Naive thymus-derived CD8-positive, alpha-beta T cell (primary cell): ENCODE measurements at regions of chr12 and their contacts with region 1.

Region 1: GRCh38 chr12:71754461-71755145 is at the start of gene RAB21:
- DNase-seq: peak; percentile 97 to 99 (median 98)
- ATAC-seq: peak; percentile 91
- H3K4me3 Mint-ChIP-seq: peak within 1 kb of the TSS; percentile 88 to 96 (median 94)
- H3K27ac Mint-ChIP-seq: peak within 1 kb of the TSS; percentile 94 to 98 (median 98)
- H3K4me1 Mint-ChIP-seq: peaks cover 16 to 51% (median 45%) of the 10 kb centered on the region in 4 donors
- H3K27me3 Mint-ChIP-seq: peaks cover 0 to 8% (median 2%) of the 10 kb centered on the region in 5 donors
- polyA plus RNA-seq, gene RAB21: 22.3 to 41.0 (median 34.7) TPM

Region 2: GRCh38 chr12:71685914-71686665 is 68.5 kb before region 1 on chr12 and contains the start of gene TMEM19:
- POLR2A ChIA-PET with region 1: interaction called, 14 read pairs
- DNase-seq: peak; percentile 76 to 92 (median 83)
- ATAC-seq: peak; percentile 91
- H3K4me3 Mint-ChIP-seq: peak within 1 kb of the TSS; percentile 89 to 100 (median 94)
- H3K27ac Mint-ChIP-seq: peak within 1 kb of the TSS; percentile 87 to 98 (median 94)
- H3K4me1 Mint-ChIP-seq: peaks cover 10 to 45% (median 28%) of the 10 kb centered on the region in 4 donors
- H3K27me3 Mint-ChIP-seq: no peaks in the 10 kb centered on the region
- polyA plus RNA-seq, gene TMEM19: 40.1 to 53.8 (median 43.5) TPM

Region 3: DNA sequence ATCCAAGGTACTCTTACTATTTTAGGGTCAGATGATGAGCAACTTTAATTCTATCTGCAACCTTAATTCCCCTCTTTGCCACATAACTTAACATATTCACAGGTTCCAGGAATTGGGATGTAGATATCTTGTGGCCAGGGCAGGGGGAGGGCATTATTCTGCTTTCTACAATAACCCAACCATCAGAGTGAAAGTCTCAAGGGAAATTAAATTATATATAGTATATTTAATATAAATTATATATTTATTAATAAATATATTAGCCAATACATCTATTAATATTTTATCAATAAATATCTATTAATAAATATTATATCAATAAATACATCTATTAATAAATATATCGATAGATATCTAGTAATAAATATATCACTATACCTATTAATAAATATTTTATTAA is 11.6 kb before region 1 on chr12:
- POLR2A ChIA-PET with region 1: no interaction called
- DNase-seq: no peak
- ATAC-seq: no peak
- H3K4me3 Mint-ChIP-seq: no peak overlapping the region
- H3K27ac Mint-ChIP-seq: no peak overlapping the region
- H3K4me1 Mint-ChIP-seq: no peaks in the 10 kb centered on the region
- H3K27me3 Mint-ChIP-seq: peaks cover 0 to 8% (median 0%) of the 10 kb centered on the region in 5 donors

Region 4: GRCh38 chr12:71840231-71840847 is 85.7 kb after region 1 on chr12:
- POLR2A ChIA-PET with region 1: interaction called, 32 read pairs
- DNase-seq: peak in 3 of 10 donors; percentile 5 to 62 (median 28)
- ATAC-seq: peak; percentile 20 to 42
- H3K4me3 Mint-ChIP-seq: peak overlapping the region; percentile 86 to 100 (median 94)
- H3K27ac Mint-ChIP-seq: peak overlapping the region; percentile 95 to 100 (median 98)
- H3K4me1 Mint-ChIP-seq: peaks cover 24 to 52% (median 45%) of the 10 kb centered on the region in 4 donors
- H3K27me3 Mint-ChIP-seq: peaks cover 0 to 1% (median 0%) of the 10 kb centered on the region in 5 donors

Region 5: DNA sequence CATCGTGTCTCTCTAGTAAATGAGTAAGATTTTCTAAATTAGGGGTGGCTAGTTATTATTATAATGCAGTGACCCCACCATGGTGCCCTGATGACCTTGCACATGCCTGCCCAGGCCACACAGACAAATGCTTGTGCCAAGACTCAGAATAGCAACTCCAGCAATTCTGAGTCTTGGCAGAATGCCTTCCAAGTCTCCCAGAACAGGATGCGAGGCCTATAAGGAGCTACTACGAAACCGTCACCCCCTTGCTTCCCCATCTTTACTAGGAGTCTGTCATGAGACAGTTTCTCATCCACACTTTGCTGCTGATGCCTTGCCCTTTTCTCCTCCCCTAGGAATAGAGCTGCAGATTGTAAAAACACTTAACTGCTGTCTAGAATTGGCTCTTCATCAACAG is 1077.4 kb after region 1 on chr12:
- POLR2A ChIA-PET with region 1: no interaction called
- DNase-seq: no peak
- ATAC-seq: no peak
- H3K4me3 Mint-ChIP-seq: no peak overlapping the region
- H3K27ac Mint-ChIP-seq: no peak overlapping the region
- H3K4me1 Mint-ChIP-seq: no peaks in the 10 kb centered on the region
- H3K27me3 Mint-ChIP-seq: no peaks in the 10 kb centered on the region